ENCODE measurements at regions of chr6 and their contacts with region 1.

Region 1: GRCh38 chr6:47701352-47701751 is 3.0 kb downstream of the ADGRF4 start:
- DNase-seq: peak; percentile 13
- H3K4me3 Mint-ChIP-seq: peak overlapping the region; percentile 27
- H3K27ac Mint-ChIP-seq: peak overlapping the region; percentile 93
- H3K4me1 Mint-ChIP-seq: peaks cover 59% of the 10 kb centered on the region
- H3K27me3 Mint-ChIP-seq: no peaks in the 10 kb centered on the region
- CTCF ChIP-seq: no peak

Region 2: DNA sequence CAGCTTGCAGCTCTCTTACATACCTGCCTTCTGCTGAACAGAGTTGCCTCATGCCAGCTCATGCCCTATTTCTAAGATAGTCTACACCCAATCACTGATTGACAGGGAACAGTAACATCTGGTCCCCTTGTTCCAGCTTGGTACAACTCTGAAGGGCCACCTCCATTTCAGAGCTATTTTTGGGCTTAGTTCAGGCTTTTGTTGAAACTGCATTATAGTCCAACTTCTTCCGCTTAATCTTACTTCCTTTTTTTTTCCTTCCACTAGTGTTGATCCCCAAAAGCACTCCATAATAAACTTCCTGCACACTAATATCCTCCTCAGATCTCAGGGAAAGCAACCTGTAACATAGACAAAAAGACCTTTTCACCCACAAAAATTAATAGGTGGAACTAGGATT is 325.9 kb before region 1 on chr6:
- CTCF ChIA-PET with region 1: no interaction called
- intact Hi-C with region 1: no loop called
- DNase-seq: no peak
- H3K4me3 Mint-ChIP-seq: no peak overlapping the region
- H3K27ac Mint-ChIP-seq: no peak overlapping the region
- H3K4me1 Mint-ChIP-seq: peaks cover 27% of the 10 kb centered on the region
- H3K27me3 Mint-ChIP-seq: no peaks in the 10 kb centered on the region
- CTCF ChIP-seq: no peak

Region 3: GRCh38 chr6:47631269-47631772 is 70.0 kb before region 1 on chr6:
- CTCF ChIA-PET with region 1: interaction called, 6 read pairs
- intact Hi-C with region 1: loop called (anchors 2 kb)
- DNase-seq: no peak
- H3K4me3 Mint-ChIP-seq: no peak overlapping the region
- H3K27ac Mint-ChIP-seq: peak overlapping the region; percentile 59
- H3K4me1 Mint-ChIP-seq: peaks cover 36% of the 10 kb centered on the region
- H3K27me3 Mint-ChIP-seq: no peaks in the 10 kb centered on the region
- CTCF ChIP-seq: no peak

Region 4: GRCh38 chr6:47651505-47651944 is 49.8 kb before region 1 on chr6:
- CTCF ChIA-PET with region 1: interaction called, 5 read pairs
- intact Hi-C with region 1: loop called (anchors 5 kb)
- DNase-seq: no peak
- H3K4me3 Mint-ChIP-seq: no peak overlapping the region
- H3K27ac Mint-ChIP-seq: no peak overlapping the region
- H3K4me1 Mint-ChIP-seq: peaks cover 33% of the 10 kb centered on the region
- H3K27me3 Mint-ChIP-seq: no peaks in the 10 kb centered on the region
- CTCF ChIP-seq: no peak

Region 5: GRCh38 chr6:47729019-47729418 is 27.7 kb after region 1 on chr6:
- CTCF ChIA-PET with region 1: interaction called, 10 read pairs
- intact Hi-C with region 1: loop called (anchors 2 kb)
- DNase-seq: peak; percentile 30
- H3K4me3 Mint-ChIP-seq: peak overlapping the region; percentile 38
- H3K27ac Mint-ChIP-seq: peak overlapping the region; percentile 98
- H3K4me1 Mint-ChIP-seq: peaks cover 48% of the 10 kb centered on the region
- H3K27me3 Mint-ChIP-seq: no peaks in the 10 kb centered on the region
- CTCF ChIP-seq: no peak

Measured in Calu3 (cell line).